Endothelial cell of umbilical vein (primary cell): ENCODE measurements at regions of chr13 and their contacts with region 1.

Region 1: DNA sequence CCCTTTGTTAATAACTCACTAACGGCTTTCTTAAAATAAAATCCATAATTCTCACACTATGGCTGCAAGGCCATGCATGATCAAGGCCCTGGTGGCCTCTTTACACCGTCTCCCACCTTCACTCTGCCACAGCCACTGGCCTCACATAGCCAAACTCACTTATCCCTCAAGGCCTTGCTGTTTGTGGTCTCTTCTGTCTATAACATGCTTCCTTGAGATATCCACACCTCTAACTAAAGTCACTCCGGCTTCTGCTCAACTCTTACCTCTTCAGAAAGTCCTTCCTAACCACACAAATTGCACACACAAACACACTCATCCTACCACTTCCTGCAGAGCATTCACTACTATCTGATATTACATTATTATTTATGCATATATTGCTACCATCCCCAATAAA is 262.5 kb downstream of the DIAPH3 start:
- DNase-seq: no peak
- H3K4me3 ChIP-seq: no peak overlapping the region
- H3K27ac ChIP-seq: no peak overlapping the region
- H3K4me1 ChIP-seq: no peaks in the 10 kb centered on the region
- H3K27me3 ChIP-seq: no peaks in the 10 kb centered on the region
- CTCF ChIP-seq: no peak
- POLR2A ChIP-seq: no peak

Region 2: DNA sequence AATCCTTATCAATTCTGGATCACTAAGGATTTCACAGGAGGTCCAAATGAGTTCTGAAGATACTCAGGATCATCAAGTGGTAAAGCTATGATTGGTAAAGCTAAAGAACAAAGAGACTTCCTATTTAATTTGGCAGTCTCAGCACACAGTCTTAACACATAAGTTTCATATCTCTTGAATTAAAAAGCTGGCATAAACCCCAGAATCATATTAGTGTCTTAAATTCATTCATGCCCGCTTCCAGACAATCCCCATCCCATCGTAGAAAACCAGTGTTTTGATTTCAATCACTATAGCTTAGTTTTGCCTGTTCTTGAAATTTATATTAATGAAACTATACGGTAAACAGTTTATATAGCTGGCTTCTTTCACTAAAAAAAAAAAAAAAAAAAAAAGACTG is 16.1 kb before region 1 on chr13:
- CTCF ChIA-PET with region 1: interaction called, 14 read pairs
- POLR2A ChIA-PET with region 1: no interaction called
- dilution Hi-C with region 1: no loop called
- intact Hi-C with region 1: no loop called
- DNase-seq: peak; percentile 24
- H3K4me3 ChIP-seq: no peak overlapping the region
- H3K27ac ChIP-seq: no peak overlapping the region
- H3K4me1 ChIP-seq: no peaks in the 10 kb centered on the region
- H3K27me3 ChIP-seq: no peaks in the 10 kb centered on the region
- CTCF ChIP-seq: no peak
- POLR2A ChIP-seq: no peak